Naive thymus-derived CD4-positive, alpha-beta T cell (primary cell): ENCODE measurements at regions of chr7 and their contacts with region 1.

Region 1: DNA sequence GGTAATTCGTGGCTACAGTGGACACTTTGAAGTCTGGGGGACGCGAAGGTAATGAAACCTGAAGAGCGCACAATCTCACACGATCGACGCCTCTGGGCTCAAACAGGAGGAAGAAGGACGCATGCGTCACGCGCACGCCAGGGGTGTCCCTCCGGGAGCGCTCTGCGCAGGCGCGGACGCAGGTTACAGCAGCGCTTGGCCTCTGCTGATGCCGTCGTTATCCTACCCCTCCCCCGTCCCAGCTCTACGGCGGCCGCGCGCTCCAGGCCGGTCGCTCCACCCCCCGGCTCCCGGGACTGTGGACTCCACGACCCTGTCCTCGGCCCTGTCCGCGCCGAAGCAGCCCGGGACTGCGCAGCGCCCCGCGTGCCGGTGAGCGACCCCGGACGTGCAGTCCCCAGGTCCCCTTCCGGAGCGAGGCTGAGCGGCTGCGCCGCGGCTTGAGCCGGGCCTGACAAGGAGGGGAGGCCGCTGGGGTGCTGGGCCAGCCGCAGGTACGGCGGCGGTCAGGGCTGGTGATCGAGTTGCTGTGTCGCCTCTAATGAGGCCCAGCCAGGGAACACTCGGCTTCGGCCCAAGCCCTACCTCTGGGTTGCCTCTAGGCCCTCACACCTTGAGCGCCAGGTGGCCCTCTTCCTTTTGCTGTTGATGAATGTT is at the start of gene TMEM106B:
- DNase-seq: peak; percentile 93 to 97 (median 96)
- ATAC-seq: peak; percentile 94
- H3K4me3 ChIP-seq: peak within 1 kb of the TSS; percentile 78
- H3K4me3 Mint-ChIP-seq: peak within 1 kb of the TSS; percentile 87 to 98 (median 97)
- H3K27ac ChIP-seq: peak within 1 kb of the TSS; percentile 97
- H3K27ac Mint-ChIP-seq: peak within 1 kb of the TSS; percentile 95 to 100 (median 99)
- H3K4me1 ChIP-seq: peaks cover 12 to 22% of the 10 kb centered on the region in 2 donors
- H3K4me1 Mint-ChIP-seq: peaks cover 25 to 56% (median 41%) of the 10 kb centered on the region in 7 donors
- H3K27me3 ChIP-seq: no peaks in the 10 kb centered on the region
- H3K27me3 Mint-ChIP-seq: peaks cover 0 to 35% (median 0%) of the 10 kb centered on the region in 5 donors
- total RNA-seq, gene TMEM106B: 22.8 to 69.2 (median 40.1) TPM

Region 2: DNA sequence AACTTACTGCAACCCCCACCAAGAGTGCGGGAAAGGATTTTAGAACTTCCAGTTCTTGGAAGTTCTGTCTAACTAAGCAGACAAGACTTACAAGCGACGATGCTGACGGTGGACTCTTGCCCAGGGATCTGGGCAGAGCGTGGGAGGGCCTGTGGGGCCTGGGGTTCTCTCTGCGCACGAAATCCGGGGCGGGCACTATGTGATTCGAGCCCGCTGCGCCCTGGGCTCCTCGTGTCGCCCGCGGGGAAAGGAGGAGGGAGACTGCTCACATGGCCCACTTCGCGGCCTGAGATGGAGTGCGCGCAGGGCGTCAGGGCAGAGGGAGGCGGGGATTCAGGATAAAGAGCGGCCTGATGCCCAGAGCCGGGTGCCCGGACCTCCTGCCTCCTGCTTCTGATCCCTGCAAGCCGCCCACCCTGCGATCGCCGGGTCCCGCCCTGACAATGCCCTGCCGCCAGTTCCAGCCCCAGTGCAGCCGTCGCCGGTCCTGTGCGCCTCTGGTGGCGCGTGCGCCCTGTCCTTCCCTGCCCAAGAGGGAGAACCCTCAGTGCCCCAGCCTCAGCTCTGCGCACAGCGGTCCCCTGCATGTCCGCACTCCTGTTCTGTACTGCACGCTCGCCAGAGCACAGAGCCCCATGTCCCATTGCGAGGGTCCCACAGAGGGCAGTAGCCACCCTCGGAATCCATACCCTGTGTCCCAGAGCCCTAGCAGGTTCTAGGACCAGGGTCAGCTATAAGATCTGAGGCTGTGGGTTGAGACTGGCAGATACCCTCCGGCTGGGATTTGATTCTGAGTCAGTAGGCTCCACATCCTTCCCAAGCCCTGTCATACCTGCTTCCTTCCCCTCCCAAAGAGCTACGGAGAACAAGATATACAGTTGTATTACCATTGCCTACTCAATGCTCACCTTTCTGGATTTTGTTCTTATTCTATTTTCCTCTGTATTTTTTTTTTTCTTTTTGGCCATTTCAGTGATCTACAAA is 99.5 kb before region 1 on chr7:
- CTCF ChIA-PET with region 1: interaction called, 3 read pairs
- POLR2A ChIA-PET with region 1: interaction called, 5 read pairs
- intact Hi-C with region 1: loop called in 1 of 2 experiments (anchors 1 kb)
- DNase-seq: peak in 6 of 9 donors; percentile 2 to 20 (median 8)
- ATAC-seq: peak; percentile 68
- H3K4me3 ChIP-seq: peak overlapping the region; percentile 20
- H3K4me3 Mint-ChIP-seq: peak overlapping the region; percentile 3 to 87 (median 77)
- H3K27ac ChIP-seq: no peak overlapping the region
- H3K27ac Mint-ChIP-seq: peak overlapping the region in 2 of 9 donors; percentile 3 to 49
- H3K4me1 ChIP-seq: no peaks in the 10 kb centered on the region
- H3K4me1 Mint-ChIP-seq: peaks cover 0 to 20% (median 13%) of the 10 kb centered on the region in 7 donors
- H3K27me3 ChIP-seq: no peaks in the 10 kb centered on the region
- H3K27me3 Mint-ChIP-seq: peaks cover 32 to 59% (median 34%) of the 10 kb centered on the region in 5 donors

Region 3: DNA sequence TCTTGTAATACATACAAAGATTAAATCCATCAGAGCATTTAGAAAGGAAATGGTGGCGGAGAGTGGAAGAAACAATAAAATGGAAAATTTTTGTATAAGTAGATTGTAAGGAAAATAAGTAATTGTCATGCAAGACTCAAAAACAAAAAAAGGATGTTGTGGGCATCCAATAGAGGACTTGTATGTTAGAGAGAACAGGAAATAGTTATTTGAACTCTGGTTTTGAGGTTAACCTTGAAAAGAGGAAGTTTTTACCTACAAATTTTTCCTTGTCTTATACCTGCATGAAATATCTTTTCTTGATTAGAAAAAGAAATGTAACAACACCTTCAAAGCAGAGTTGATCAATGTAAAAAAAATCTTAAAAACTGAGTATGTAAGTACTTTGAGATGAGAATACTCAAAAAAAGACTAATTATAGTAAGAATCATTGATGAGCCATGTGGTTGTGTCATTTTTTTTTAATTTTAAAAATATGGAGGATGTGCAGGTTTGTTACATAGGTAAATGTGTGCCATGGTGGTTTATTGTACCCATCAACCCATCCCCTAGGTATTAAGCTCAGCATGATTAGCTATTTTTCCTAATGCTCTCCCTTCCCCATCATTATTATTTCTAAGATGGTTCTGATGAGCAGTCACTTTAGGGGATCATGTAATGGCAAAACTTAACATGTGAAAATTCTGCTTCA is 11.9 kb after region 1 on chr7:
- CTCF ChIA-PET with region 1: no interaction called
- POLR2A ChIA-PET with region 1: interaction called, 6 read pairs
- intact Hi-C with region 1: loop called (anchors 1 kb)
- DNase-seq: peak in 7 of 9 donors; percentile 41 to 72 (median 61)
- ATAC-seq: peak; percentile 87
- H3K4me3 ChIP-seq: no peak overlapping the region
- H3K4me3 Mint-ChIP-seq: peak overlapping the region; percentile 51 to 79 (median 66)
- H3K27ac ChIP-seq: peak overlapping the region; percentile 29
- H3K27ac Mint-ChIP-seq: peak overlapping the region; percentile 64 to 87 (median 84)
- H3K4me1 ChIP-seq: peaks cover 18 to 31% of the 10 kb centered on the region in 2 donors
- H3K4me1 Mint-ChIP-seq: peaks cover 30 to 88% (median 78%) of the 10 kb centered on the region in 7 donors
- H3K27me3 ChIP-seq: no peaks in the 10 kb centered on the region
- H3K27me3 Mint-ChIP-seq: no peaks in the 10 kb centered on the region

Region 4: GRCh38 chr7:12322284-12322902 is 111.2 kb after region 1 on chr7:
- CTCF ChIA-PET with region 1: interaction called, 6 read pairs
- POLR2A ChIA-PET with region 1: no interaction called
- intact Hi-C with region 1: loop called (anchors 1 kb)
- DNase-seq: peak in 7 of 9 donors; percentile 5 to 53 (median 47)
- ATAC-seq: no peak
- H3K4me3 ChIP-seq: no peak overlapping the region
- H3K4me3 Mint-ChIP-seq: no peak overlapping the region
- H3K27ac ChIP-seq: no peak overlapping the region
- H3K27ac Mint-ChIP-seq: no peak overlapping the region
- H3K4me1 ChIP-seq: no peaks in the 10 kb centered on the region
- H3K4me1 Mint-ChIP-seq: peaks cover 0 to 4% (median 0%) of the 10 kb centered on the region in 7 donors
- H3K27me3 ChIP-seq: no peaks in the 10 kb centered on the region
- H3K27me3 Mint-ChIP-seq: peaks cover 0 to 4% (median 0%) of the 10 kb centered on the region in 5 donors

Region 5: DNA sequence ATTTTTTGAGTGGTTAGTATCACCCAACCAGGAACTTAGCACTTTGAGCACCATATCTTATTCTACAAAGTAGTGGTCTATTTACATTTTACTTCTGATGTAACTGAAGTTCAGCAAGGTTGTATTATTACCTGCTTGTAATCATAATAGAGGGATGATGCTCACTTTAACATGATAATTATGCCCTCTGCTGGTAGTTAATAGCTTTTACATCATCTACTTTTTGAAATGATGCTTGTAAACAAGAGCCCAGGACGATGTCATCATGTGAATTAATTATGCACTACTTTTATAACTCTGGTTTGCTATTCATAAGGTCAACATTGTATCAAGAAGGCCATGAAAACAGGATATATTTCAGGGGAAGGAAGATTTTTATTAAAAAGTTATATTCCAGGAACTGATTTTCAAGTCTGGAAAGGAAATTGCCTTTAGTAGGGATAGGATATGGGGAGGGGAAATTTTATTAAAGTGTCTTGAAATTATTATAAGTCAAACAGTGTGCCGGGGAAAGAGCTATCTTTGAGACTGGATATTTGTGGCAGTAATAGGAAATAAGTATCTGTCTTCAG is 279.0 kb after region 1 on chr7:
- CTCF ChIA-PET with region 1: no interaction called
- POLR2A ChIA-PET with region 1: no interaction called
- intact Hi-C with region 1: loop called in 1 of 2 experiments (anchors 5 kb)
- DNase-seq: peak in 3 of 9 donors; percentile 9 to 30 (median 19)
- ATAC-seq: peak; percentile 68
- H3K4me3 ChIP-seq: no peak overlapping the region
- H3K4me3 Mint-ChIP-seq: no peak overlapping the region
- H3K27ac ChIP-seq: no peak overlapping the region
- H3K27ac Mint-ChIP-seq: no peak overlapping the region
- H3K4me1 ChIP-seq: no peaks in the 10 kb centered on the region
- H3K4me1 Mint-ChIP-seq: no peaks in the 10 kb centered on the region
- H3K27me3 ChIP-seq: no peaks in the 10 kb centered on the region
- H3K27me3 Mint-ChIP-seq: peaks cover 4 to 14% (median 8%) of the 10 kb centered on the region in 5 donors